IMR-90 (cell line): ENCODE measurements at regions of chr17 and their contacts with region 1.

Region 1: DNA sequence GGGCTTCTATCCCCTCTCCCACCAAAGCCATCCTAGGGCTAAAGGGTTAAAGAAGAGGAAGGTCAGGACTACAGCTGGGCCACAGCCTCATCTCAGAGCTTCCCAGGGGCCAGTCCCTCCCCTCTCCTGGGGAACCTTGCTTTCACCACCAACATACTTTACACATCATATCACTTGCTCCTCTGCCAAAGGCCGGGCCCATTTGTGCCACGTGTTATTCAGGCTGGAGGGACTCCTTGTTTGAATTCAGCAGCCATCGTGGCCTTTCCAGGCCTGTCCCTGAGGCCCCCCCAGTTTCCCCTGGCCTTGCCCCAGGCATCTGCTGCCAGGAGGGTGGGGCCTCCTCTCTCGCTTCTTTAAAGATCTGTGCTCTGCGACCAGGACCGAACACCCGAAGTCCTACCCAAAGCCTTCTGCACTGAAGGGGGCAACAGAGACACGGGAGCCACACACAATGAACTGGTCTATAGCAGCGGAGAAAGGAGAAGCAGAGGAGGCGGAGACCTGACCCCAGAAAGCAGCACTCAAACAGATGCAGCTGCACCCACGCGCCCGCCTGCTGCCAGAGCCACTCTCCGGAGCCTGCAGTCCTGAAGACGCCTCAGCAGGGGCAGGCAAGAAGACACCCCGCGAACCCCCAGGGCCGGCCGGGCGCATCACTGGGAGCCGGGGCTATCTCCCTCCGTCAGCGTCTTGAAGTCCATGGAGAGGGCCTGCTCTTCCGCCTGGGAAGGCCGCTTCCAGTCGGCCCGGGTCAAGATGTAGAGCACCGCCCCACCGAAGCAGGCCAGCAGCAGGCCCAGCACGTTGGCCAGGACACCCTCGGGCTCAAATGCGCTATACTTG is 12.1 kb downstream of the CYB561 start:
- DNase-seq: peak; percentile 92
- ATAC-seq: peak; percentile 79
- H3K4me3 ChIP-seq: no peak overlapping the region
- H3K27ac ChIP-seq: peak overlapping the region; percentile 61
- H3K4me1 ChIP-seq: peaks cover 28% of the 10 kb centered on the region
- H3K27me3 ChIP-seq: no peaks in the 10 kb centered on the region
- CTCF ChIP-seq: no peak
- POLR2A ChIP-seq: no peak
- RAD21 ChIP-seq: no peak

Region 2: GRCh38 chr17:63382826-63383225 is 51.1 kb before region 1 on chr17:
- CTCF ChIA-PET with region 1: no interaction called
- POLR2A ChIA-PET with region 1: no interaction called
- dilution Hi-C with region 1: no loop called
- in situ Hi-C with region 1: no loop called
- intact Hi-C with region 1: no loop called
- DNase-seq: peak; percentile 71
- ATAC-seq: peak; percentile 81
- H3K4me3 ChIP-seq: no peak overlapping the region
- H3K27ac ChIP-seq: no peak overlapping the region
- H3K4me1 ChIP-seq: peaks cover 8% of the 10 kb centered on the region; the same call in 1 of the 2 replicates
- H3K27me3 ChIP-seq: no peaks in the 10 kb centered on the region
- CTCF ChIP-seq: no peak
- POLR2A ChIP-seq: no peak
- RAD21 ChIP-seq: no peak

Region 3: GRCh38 chr17:63478791-63479494 is 45.0 kb after region 1 on chr17:
- CTCF ChIA-PET with region 1: no interaction called
- POLR2A ChIA-PET with region 1: no interaction called
- dilution Hi-C with region 1: no loop called
- in situ Hi-C with region 1: no loop called
- intact Hi-C with region 1: loop called (anchors 2 kb)
- DNase-seq: peak; percentile 92
- ATAC-seq: peak; percentile 87
- H3K4me3 ChIP-seq: no peak overlapping the region
- H3K27ac ChIP-seq: no peak overlapping the region
- H3K4me1 ChIP-seq: peaks cover 11% of the 10 kb centered on the region
- H3K27me3 ChIP-seq: peaks cover 11% of the 10 kb centered on the region
- CTCF ChIP-seq: peak; percentile 89
- POLR2A ChIP-seq: no peak
- RAD21 ChIP-seq: peak; percentile 87